Calu3 (cell line): ENCODE measurements at regions of chr17 and their contacts with region 1.

Region 1: DNA sequence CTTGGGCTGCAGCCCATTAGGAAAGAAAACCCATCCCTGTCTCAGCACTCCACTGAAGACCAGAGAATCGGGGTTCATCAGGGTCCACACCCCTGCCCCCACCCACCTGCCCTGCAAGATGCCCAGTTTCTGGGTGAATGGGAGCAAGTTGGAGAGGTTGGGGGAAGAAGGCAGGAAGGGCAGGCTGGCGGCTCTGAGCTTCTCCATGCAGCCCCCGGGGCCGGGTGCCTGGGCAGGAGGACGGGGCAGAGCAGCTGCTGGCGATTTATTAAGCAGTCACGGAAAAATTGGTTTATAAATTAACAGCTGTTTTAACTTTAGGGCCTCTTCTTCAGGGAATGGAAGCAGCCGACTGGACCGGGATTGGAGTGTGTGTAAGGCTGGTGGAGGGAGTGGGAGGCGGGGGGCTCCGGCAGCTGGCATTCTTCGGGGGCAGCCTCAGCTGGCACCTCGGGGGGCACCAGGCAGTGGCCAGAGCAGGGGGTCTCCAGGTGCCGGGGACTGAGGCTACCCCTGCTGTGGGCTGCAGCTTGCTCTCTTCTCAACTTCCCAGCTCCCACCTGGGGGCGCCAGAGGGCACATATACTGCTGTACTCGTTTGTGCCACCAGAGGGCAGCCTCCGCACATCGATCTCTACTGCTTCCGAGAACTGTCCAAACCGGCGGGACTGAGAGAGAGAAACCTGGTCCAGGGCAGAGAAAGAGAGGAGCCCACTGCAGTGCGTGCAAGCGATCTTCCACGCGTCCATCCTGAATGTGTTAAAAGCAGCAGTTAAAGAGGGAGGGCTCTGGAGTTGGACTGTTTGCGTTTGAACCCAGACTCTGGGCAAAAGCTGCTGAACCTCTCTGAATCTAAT is 5.0 kb upstream of the PPP1R1B start:
- DNase-seq: peak; percentile 100
- H3K4me3 Mint-ChIP-seq: peak overlapping the region; percentile 18
- H3K27ac Mint-ChIP-seq: peak overlapping the region; percentile 3
- H3K4me1 Mint-ChIP-seq: peaks cover 55% of the 10 kb centered on the region
- H3K27me3 Mint-ChIP-seq: peaks cover 83% of the 10 kb centered on the region
- CTCF ChIP-seq: no peak

Region 2: DNA sequence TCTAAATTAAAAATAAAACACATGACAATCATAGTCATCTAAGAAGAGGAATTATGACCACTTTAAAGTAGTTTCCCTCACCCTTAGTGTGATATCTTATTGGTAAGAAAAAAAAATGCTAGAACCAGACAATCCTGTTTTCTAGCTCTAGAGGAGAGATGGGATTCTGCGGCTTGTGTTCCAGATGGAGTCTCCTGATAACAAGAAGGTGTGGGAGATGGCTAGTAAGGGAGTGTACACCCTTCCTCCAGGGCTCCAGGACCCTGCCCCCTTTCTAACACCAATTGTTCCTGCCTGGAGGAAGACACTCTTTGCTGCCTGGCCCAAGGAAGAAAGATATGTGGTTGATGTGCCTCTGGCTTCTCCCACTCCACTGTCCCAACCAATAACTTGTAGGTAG is 585.7 kb before region 1 on chr17:
- CTCF ChIA-PET with region 1: no interaction called
- intact Hi-C with region 1: no loop called
- DNase-seq: peak; percentile 61
- H3K4me3 Mint-ChIP-seq: no peak overlapping the region
- H3K27ac Mint-ChIP-seq: no peak overlapping the region
- H3K4me1 Mint-ChIP-seq: peaks cover 9% of the 10 kb centered on the region
- H3K27me3 Mint-ChIP-seq: peaks cover 80% of the 10 kb centered on the region
- CTCF ChIP-seq: no peak

Region 3: DNA sequence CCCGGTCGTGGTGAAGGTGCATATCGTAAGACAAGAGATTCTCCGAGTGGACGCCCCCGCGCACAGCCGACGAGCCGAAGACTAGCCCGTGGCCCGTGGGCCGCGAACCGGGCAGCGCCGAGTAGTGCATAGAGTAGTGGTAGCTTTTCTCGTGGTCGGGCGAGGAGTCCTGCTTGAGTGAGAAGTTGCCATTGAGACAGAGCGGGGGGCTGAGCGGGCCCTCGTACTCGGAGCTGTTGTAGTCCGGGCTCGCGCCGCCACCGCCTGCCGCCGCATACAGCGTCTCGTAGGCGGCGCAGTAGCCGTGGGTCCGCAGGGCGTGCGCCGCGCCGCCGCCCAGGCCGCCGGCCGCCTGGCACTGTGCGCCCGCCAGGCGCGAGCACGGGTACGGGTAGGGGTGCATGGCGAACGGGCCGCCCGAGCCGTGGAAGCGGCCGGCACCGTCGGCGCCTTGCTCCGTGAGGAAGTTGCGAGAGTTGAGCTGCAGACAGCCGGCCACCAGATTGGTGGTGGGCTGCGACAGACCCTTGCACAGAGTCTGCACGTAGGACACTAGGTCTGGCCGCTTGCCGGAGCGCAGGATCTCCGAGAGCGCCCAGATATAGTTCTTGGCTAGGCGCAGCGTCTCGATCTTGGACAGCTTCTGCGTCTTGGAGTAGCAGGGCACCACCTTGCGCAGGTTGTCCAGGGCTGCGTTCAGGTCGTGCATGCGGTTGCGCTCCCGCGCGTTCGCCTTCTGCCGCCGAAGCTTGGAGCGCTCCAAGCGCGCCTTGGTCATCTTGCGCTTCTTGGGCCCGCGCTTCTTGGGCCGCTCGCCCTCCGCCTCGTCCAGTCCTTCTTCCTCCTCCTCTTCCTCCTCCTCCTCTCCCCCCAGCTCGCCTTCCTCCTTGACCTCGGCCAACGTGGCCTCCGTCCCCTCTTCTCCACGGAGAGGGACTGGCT is 16.0 kb before region 1 on chr17:
- CTCF ChIA-PET with region 1: interaction called, 42,089 read pairs
- intact Hi-C with region 1: loop called (anchors 2 kb)
- DNase-seq: peak; percentile 97
- H3K4me3 Mint-ChIP-seq: peak overlapping the region; percentile 61
- H3K27ac Mint-ChIP-seq: no peak overlapping the region
- H3K4me1 Mint-ChIP-seq: peaks cover 46% of the 10 kb centered on the region
- H3K27me3 Mint-ChIP-seq: peaks cover 100% of the 10 kb centered on the region
- CTCF ChIP-seq: no peak

Region 4: DNA sequence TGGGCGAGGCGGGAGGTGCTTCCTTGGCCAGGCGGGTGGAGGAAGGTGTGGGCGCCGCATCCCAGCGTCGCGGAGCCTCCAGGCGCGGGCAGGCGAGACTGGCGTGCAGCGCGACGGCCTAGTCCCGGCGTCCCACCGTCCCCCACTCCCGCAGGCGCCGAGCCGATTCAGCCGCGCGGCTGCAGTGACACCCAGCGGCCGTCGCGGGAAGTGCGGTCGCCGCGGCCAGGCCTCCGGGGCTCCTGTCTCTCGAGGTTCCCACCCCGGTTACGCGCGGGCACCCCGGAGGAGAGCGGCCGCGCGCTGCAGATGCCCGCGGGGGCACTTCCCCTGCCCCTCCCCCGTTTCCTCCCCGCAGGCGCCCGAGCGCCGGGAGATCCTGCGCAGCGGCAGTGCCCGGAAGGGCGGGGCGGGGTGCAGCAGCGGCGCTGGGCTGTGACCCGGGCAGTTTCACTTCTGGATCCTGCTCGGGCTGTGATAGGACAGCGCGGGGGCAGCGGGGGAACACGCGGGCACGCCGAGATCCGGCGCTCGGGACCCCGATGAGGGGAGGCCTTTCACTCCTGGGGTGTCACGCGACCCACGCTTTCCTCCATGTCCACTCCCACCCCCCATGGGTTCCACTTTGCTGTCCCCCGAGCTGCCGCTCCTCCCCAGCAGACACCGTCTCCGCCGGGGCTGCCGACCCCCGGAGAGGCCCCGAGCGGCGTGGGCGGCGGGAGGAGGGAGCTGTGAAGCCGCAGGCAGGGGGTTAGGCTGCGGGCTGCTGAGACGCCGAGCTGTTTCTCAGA is 132.6 kb after region 1 on chr17:
- CTCF ChIA-PET with region 1: interaction called, 42,089 read pairs
- intact Hi-C with region 1: loop called (anchors 1 kb)
- DNase-seq: peak; percentile 100
- H3K4me3 Mint-ChIP-seq: peak overlapping the region; percentile 63
- H3K27ac Mint-ChIP-seq: peak overlapping the region; percentile 12
- H3K4me1 Mint-ChIP-seq: peaks cover 58% of the 10 kb centered on the region
- H3K27me3 Mint-ChIP-seq: peaks cover 35% of the 10 kb centered on the region
- CTCF ChIP-seq: no peak

Region 5: GRCh38 chr17:39835038-39835786 is 213.5 kb after region 1 on chr17:
- CTCF ChIA-PET with region 1: interaction called, 272 read pairs
- intact Hi-C with region 1: no loop called
- DNase-seq: peak; percentile 79
- H3K4me3 Mint-ChIP-seq: no peak overlapping the region
- H3K27ac Mint-ChIP-seq: no peak overlapping the region
- H3K4me1 Mint-ChIP-seq: no peaks in the 10 kb centered on the region
- H3K27me3 Mint-ChIP-seq: no peaks in the 10 kb centered on the region
- CTCF ChIP-seq: no peak

Region 6: DNA sequence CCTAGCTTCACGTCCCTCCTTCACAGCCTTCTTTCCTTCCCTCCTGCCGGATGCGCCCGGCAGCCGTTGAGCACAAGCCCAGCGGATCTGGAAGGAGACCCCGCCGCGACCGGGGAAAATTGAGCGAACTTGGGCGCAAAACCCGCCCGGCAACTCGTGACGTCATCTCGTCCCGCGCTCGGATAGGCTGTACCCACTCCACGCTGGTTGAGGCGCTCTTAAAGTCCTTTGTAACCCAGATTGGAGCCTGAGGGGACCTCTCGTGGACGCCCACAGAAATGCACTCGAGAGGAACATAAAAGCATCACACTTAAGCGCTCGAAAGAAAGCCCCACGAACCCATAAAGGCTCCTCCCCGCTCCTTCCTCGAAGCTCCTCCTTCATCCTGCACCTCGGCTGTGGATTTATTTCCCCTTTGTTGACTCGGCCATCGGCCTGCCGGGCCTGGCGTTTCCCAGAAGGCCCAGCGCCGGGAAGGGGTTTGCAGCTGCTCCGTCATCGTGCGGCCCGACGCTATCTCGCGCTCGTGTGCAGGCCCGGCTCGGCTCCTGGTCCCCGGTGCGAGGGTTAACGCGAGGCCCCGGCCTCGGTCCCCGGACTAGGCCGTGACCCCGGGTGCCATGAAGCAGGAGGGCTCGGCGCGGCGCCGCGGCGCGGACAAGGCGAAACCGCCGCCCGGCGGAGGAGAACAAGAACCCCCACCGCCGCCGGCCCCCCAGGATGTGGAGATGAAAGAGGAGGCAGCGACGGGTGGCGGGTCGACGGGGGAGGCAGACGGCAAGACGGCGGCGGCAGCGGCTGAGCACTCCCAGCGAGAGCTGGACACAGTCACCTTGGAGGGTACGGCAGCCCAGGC is 358.8 kb after region 1 on chr17 and contains the start of gene PSMD3:
- CTCF ChIA-PET with region 1: interaction called, 5,681 read pairs
- intact Hi-C with region 1: loop called (anchors 1 kb)
- DNase-seq: peak; percentile 100
- H3K4me3 Mint-ChIP-seq: peak within 1 kb of the TSS; percentile 77
- H3K27ac Mint-ChIP-seq: peak within 1 kb of the TSS; percentile 81
- H3K4me1 Mint-ChIP-seq: peaks cover 26% of the 10 kb centered on the region
- H3K27me3 Mint-ChIP-seq: peaks cover 43% of the 10 kb centered on the region
- CTCF ChIP-seq: no peak
- total RNA-seq, gene PSMD3: 2,152 and 2,179 TPM in 2 replicates

Region 7: DNA sequence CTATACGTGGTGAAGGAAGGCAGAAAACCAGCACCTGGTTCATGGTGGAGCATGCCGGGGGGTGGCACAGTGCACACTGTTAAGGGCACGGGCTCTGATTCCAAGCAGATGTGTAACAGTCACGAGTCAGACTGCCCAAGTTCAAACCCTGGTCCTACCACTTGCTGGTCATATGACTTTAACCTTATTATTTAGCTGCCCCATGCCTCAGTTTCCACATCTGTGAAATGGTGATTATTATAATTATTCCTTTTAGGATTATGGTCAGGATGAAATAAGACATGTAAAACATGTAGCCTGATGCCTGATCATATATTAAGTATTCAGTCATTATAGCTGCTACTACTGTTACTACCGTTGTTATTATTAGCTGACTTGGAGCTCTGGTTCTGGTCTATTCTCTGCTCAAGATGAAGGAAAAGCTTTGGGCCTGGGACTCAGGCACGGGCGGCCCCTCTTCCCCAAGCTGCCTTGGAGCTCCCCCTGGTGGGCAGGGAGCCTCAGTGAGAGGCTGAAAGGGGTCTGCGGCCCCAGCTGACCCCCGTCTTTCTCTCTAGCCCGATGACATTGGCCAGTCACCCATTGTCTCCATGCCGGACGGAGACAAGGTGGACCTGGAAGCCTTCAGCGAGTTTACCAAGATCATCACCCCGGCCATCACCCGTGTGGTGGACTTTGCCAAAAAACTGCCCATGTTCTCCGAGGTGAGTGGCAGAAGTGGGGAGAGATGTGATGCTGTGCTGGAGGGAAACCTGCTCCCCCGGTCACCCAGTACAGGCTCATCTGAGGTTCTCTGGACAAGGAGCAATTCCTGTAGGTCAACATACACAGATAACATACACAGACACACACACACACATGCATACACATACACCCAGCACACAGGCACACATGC is 464.6 kb after region 1 on chr17:
- CTCF ChIA-PET with region 1: interaction called, 15 read pairs
- intact Hi-C with region 1: no loop called
- DNase-seq: peak; percentile 100
- H3K4me3 Mint-ChIP-seq: no peak overlapping the region
- H3K27ac Mint-ChIP-seq: no peak overlapping the region
- H3K4me1 Mint-ChIP-seq: no peaks in the 10 kb centered on the region
- H3K27me3 Mint-ChIP-seq: no peaks in the 10 kb centered on the region
- CTCF ChIP-seq: no peak